ENCODE measurements at regions of chr1 and their contacts with region 1.

Region 1: GRCh38 chr1:231757101-231757404 is 130.5 kb downstream of the DISC1 start:
- DNase-seq: no peak
- H3K4me3 Mint-ChIP-seq: no peak overlapping the region
- H3K27ac Mint-ChIP-seq: peak overlapping the region; percentile 57
- H3K4me1 Mint-ChIP-seq: no peaks in the 10 kb centered on the region
- H3K27me3 Mint-ChIP-seq: no peaks in the 10 kb centered on the region
- CTCF ChIP-seq: no peak

Region 2: DNA sequence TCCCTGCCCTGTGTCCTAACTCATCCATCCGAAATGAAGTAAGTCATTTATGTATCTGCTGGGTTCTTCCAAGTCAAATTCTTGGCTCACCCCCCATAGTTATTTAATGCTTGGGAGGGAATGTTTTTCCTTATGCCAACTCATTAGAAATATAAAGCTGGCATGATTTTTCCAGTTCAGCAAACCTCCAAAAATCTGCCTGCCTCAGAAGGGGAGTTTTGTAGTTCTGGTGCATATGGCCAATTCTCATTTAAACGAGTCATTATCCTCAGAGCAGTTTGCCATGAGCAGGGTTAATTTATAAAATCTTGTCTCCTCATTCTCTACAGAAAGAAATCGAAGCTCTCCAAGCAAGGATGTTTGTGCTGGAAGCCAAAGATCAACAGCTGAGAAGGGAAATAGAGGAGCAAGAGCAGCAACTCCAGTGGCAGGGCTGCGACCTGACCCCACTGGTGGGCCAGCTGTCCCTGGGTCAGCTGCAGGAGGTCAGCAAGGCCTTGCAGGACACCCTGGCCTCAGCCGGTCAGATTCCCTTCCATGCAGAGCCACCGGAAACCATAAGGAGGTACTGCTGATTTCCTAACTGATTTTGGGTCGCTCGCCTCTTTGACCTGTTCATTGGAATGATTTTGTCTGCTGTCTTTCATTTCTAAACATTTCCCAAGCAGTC is 13.6 kb after region 1 on chr1:
- CTCF ChIA-PET with region 1: interaction called, 60 read pairs
- POLR2A ChIA-PET with region 1: interaction called, 6 read pairs
- intact Hi-C with region 1: no loop called
- DNase-seq: no peak
- H3K4me3 Mint-ChIP-seq: no peak overlapping the region
- H3K27ac Mint-ChIP-seq: no peak overlapping the region
- H3K4me1 Mint-ChIP-seq: no peaks in the 10 kb centered on the region
- H3K27me3 Mint-ChIP-seq: no peaks in the 10 kb centered on the region
- CTCF ChIP-seq: no peak

Region 3: GRCh38 chr1:231786126-231786525 is 29.1 kb after region 1 on chr1:
- CTCF ChIA-PET with region 1: interaction called, 11 read pairs
- POLR2A ChIA-PET with region 1: interaction called, 3 read pairs
- intact Hi-C with region 1: no loop called
- DNase-seq: no peak
- H3K4me3 Mint-ChIP-seq: no peak overlapping the region
- H3K27ac Mint-ChIP-seq: no peak overlapping the region
- H3K4me1 Mint-ChIP-seq: peaks cover 8% of the 10 kb centered on the region
- H3K27me3 Mint-ChIP-seq: no peaks in the 10 kb centered on the region
- CTCF ChIP-seq: no peak

Region 4: GRCh38 chr1:231818337-231818736 is 61.3 kb after region 1 on chr1:
- CTCF ChIA-PET with region 1: interaction called, 12 read pairs
- POLR2A ChIA-PET with region 1: interaction called, 3 read pairs
- intact Hi-C with region 1: no loop called
- DNase-seq: no peak
- H3K4me3 Mint-ChIP-seq: no peak overlapping the region
- H3K27ac Mint-ChIP-seq: no peak overlapping the region
- H3K4me1 Mint-ChIP-seq: peaks cover 9% of the 10 kb centered on the region
- H3K27me3 Mint-ChIP-seq: no peaks in the 10 kb centered on the region
- CTCF ChIP-seq: no peak

Region 5: GRCh38 chr1:232226197-232226712 is 469.2 kb after region 1 on chr1:
- CTCF ChIA-PET with region 1: interaction called, 7 read pairs
- POLR2A ChIA-PET with region 1: interaction called, 4 read pairs
- intact Hi-C with region 1: loop called (anchors 10 kb)
- DNase-seq: peak; percentile 96
- H3K4me3 Mint-ChIP-seq: peak overlapping the region; percentile 5
- H3K27ac Mint-ChIP-seq: peak overlapping the region; percentile 10
- H3K4me1 Mint-ChIP-seq: peaks cover 52% of the 10 kb centered on the region
- H3K27me3 Mint-ChIP-seq: no peaks in the 10 kb centered on the region
- CTCF ChIP-seq: no peak

Region 6: GRCh38 chr1:232528472-232529089 is 771.5 kb after region 1 on chr1:
- CTCF ChIA-PET with region 1: interaction called, 5 read pairs
- POLR2A ChIA-PET with region 1: no interaction called
- intact Hi-C with region 1: loop called (anchors 2 kb)
- DNase-seq: no peak
- H3K4me3 Mint-ChIP-seq: no peak overlapping the region
- H3K27ac Mint-ChIP-seq: peak overlapping the region; percentile 78
- H3K4me1 Mint-ChIP-seq: peaks cover 52% of the 10 kb centered on the region
- H3K27me3 Mint-ChIP-seq: no peaks in the 10 kb centered on the region
- CTCF ChIP-seq: no peak

Measured in MCF 10A (cell line).